Activated B cell treated with CpG ODN at 0.5 μM for 24 hours (primary cell): ENCODE measurements at regions of chr5 and their contacts with region 1.

Region 1: GRCh38 chr5:99104538-99105132 is 175.8 kb upstream of the CHD1 start:
- DNase-seq: no peak
- ATAC-seq: no peak
- H3K4me3 Mint-ChIP-seq: no peak overlapping the region
- H3K27ac Mint-ChIP-seq: no peak overlapping the region
- H3K4me1 Mint-ChIP-seq: no peaks in the 10 kb centered on the region
- H3K27me3 Mint-ChIP-seq: peaks cover 4% of the 10 kb centered on the region
- CTCF ChIP-seq: no peak

Region 2: DNA sequence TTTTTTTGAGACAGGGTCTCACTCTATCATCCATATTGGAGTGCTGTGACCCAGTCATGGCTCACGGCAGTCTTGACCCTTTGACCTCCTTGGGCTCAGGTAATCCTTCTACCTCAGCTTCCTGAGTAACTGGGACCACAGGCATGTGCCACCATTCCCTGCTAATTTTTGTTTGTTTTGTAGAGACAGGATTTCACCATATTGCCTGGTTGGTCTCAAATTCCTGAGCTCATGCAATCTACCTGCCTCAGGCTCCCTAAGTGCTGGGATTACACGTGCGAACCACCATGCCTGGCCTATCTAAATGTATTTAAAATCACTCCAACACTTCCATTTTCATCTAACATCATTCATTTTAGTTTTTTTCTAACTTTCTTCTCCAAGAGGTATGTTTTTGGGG is 14.7 kb after region 1 on chr5:
- CTCF ChIA-PET with region 1: interaction called, 18 read pairs
- POLR2A ChIA-PET with region 1: no interaction called
- intact Hi-C with region 1: no loop called
- DNase-seq: no peak
- ATAC-seq: no peak
- H3K4me3 Mint-ChIP-seq: no peak overlapping the region
- H3K27ac Mint-ChIP-seq: no peak overlapping the region
- H3K4me1 Mint-ChIP-seq: no peaks in the 10 kb centered on the region
- H3K27me3 Mint-ChIP-seq: peaks cover 3% of the 10 kb centered on the region
- CTCF ChIP-seq: no peak

Region 3: DNA sequence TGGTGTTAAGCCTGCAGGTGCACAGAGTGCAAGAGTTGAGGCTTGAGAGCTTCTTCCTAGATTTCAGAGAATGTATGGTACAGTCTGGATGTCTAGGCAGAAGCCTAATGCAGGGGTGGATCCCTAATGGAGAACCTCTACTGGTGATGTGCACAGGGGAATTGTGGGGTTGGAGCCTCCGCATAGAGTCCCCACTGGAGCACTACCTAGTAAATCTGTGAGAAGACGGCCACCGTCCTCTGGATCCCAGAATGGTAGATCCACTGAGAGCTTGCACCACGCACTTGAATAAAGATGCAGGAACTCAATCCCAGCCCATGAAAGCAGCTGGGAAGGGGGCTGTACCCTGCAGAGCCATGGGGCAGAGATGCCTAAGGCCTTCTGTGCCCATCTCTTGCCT is 731.2 kb after region 1 on chr5:
- CTCF ChIA-PET with region 1: no interaction called
- POLR2A ChIA-PET with region 1: no interaction called
- intact Hi-C with region 1: no loop called
- DNase-seq: no peak
- ATAC-seq: no peak
- H3K4me3 Mint-ChIP-seq: no peak overlapping the region
- H3K27ac Mint-ChIP-seq: no peak overlapping the region
- H3K4me1 Mint-ChIP-seq: no peaks in the 10 kb centered on the region
- H3K27me3 Mint-ChIP-seq: no peaks in the 10 kb centered on the region
- CTCF ChIP-seq: no peak